ENCODE measurements at regions of chr20 and their contacts with region 1.

Region 1: GRCh38 chr20:57480444-57481160 is 44.3 kb downstream of the CTCFL start:
- DNase-seq: peak; percentile 74 to 93 (median 89)
- H3K4me3 ChIP-seq: peak overlapping the region in 4 of 7 experiments; percentile 23 to 51 (median 42)
- H3K27ac ChIP-seq: no peak overlapping the region
- H3K4me1 ChIP-seq: peaks cover 13 to 53% (median 46%) of the 10 kb centered on the region in 4 experiments
- H3K27me3 ChIP-seq: no peaks in the 10 kb centered on the region

Region 2: GRCh38 chr20:57493091-57493615 is 12.6 kb after region 1 on chr20:
- CTCF ChIA-PET with region 1: interaction called, 16 read pairs
- POLR2A ChIA-PET with region 1: no interaction called
- DNase-seq: no peak
- H3K4me3 ChIP-seq: no peak overlapping the region
- H3K27ac ChIP-seq: no peak overlapping the region
- H3K4me1 ChIP-seq: peaks cover 0 to 7% (median 3%) of the 10 kb centered on the region in 4 experiments
- H3K27me3 ChIP-seq: peaks cover 0 to 4% (median 2%) of the 10 kb centered on the region in 5 experiments

Region 3: DNA sequence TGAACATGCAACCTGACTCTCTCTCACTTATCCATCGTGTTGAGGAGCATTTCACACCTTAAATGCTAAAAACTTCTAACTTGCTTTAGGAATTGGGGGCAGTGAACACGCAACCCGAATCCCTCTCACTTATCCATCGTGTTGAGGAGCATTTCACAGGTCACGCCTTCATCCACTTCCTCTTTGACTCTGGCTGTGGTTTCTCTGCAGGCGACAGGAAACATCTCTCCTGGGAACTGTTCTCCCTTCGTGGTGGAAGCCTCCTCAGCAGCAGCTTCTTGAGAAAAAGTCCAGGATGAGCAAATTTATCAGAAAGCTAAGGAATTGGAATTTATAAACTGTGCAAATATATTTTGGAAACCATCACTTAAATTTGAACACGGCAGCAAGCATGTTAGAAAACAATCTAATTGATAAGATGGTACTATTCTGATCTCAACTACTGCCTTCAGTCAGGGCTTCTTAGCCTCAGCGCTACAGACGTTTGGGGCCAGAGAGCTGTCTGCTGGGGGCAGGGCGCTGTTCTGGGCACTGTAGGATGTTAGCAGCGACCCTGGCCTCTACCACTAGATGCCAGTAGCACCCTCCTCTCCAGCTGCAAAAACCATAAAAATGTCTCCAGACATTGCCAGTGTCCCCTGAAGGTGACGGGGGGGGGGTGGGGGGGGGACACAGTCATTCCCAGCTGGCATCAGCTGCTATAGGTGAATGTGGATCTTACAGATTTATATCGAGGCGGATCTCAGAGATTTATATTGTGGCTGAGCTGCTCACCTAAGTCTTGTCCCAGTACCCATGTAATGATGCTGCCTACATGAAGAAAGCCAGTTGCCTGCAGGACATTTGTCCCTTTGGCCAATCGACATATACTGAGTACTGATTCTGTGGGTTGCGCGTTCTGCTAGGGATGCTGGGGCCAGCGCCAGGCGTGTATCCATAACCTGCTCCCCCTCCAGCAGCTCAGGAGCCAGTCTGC is 18.1 kb after region 1 on chr20:
- CTCF ChIA-PET with region 1: interaction called, 16 read pairs
- POLR2A ChIA-PET with region 1: no interaction called
- DNase-seq: peak; percentile 49 to 73 (median 64)
- H3K4me3 ChIP-seq: peak overlapping the region in 2 of 7 experiments; percentile 39 to 56
- H3K27ac ChIP-seq: no peak overlapping the region
- H3K4me1 ChIP-seq: peaks cover 11 to 23% (median 14%) of the 10 kb centered on the region in 4 experiments
- H3K27me3 ChIP-seq: peaks cover 9 to 28% (median 15%) of the 10 kb centered on the region in 5 experiments

Region 4: GRCh38 chr20:57546956-57547649 is 66.5 kb after region 1 on chr20:
- CTCF ChIA-PET with region 1: no interaction called
- POLR2A ChIA-PET with region 1: no interaction called
- DNase-seq: no peak
- H3K4me3 ChIP-seq: no peak overlapping the region
- H3K27ac ChIP-seq: no peak overlapping the region
- H3K4me1 ChIP-seq: no peaks in the 10 kb centered on the region
- H3K27me3 ChIP-seq: peaks cover 2 to 17% (median 7%) of the 10 kb centered on the region in 5 experiments

Measured in common myeloid progenitor, CD34-positive (primary cell).